ENCODE measurements at regions of chr5 and their contacts with region 1.

Region 1: GRCh38 chr5:177317959-177318377 is 6.3 kb upstream of the MXD3 start:
- DNase-seq: peak; percentile 89
- H3K4me3 Mint-ChIP-seq: no peak overlapping the region
- H3K27ac Mint-ChIP-seq: peak overlapping the region; percentile 65
- H3K4me1 Mint-ChIP-seq: peaks cover 39% of the 10 kb centered on the region
- H3K27me3 Mint-ChIP-seq: no peaks in the 10 kb centered on the region
- CTCF ChIP-seq: peak; percentile 86

Region 2: GRCh38 chr5:177351385-177352329 is 33.7 kb after region 1 on chr5 and contains the start of gene LMAN2:
- CTCF ChIA-PET with region 1: interaction called, 3 read pairs
- intact Hi-C with region 1: loop called (anchors 5 kb)
- DNase-seq: peak; percentile 94
- H3K4me3 Mint-ChIP-seq: peak within 1 kb of the TSS; percentile 86
- H3K27ac Mint-ChIP-seq: peak within 1 kb of the TSS; percentile 96
- H3K4me1 Mint-ChIP-seq: peaks cover 57% of the 10 kb centered on the region
- H3K27me3 Mint-ChIP-seq: no peaks in the 10 kb centered on the region
- CTCF ChIP-seq: no peak
- total RNA-seq, gene LMAN2: 278 and 305 TPM in 2 replicates

Region 3: DNA sequence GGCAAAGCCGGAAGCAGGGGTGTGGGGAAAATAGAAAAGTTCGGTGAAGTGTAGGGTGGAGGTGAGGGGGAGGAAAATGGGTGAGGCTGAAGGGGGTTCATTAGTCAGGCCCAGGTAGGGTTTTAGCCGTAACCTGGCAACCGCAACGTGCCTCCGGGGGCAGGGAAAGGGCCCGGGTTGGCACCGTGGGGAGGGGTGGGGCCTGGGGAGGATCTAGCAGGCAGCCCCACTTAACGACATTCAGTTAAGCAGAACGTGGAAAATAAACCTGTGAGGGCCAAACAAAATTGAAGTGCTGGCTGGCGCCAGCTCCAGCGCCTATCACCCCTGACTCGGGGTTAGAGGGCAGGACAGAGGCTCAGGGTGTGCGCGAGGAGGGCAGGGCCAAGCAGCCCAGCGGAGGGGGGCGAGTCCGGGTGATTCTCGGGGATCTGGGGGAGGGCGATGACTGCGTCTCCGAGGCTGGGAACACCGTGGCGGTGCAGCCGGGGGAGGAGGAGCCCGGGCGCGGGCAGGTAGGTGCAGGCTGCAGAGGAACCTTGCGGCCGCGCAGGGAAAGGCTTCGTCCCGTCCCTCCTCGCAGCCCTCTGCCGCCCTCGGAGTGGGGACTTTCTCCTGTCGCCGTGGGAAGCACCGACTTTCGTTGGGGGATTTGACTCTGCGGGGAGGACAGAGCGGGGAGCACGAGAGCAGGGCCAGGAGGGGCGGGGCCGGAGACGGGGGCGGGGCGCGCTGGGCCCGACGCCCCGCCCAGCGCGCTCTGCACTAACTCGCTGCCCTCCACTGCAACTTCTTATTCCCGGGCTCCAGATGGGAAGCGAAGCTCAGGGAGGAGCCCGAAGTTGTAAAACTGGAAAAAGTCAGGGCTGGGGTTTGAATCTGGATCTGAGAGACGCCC is 44.9 kb after region 1 on chr5:
- CTCF ChIA-PET with region 1: interaction called, 3 read pairs
- intact Hi-C with region 1: loop called (anchors 1 kb)
- DNase-seq: peak; percentile 69
- H3K4me3 Mint-ChIP-seq: peak overlapping the region; percentile 74
- H3K27ac Mint-ChIP-seq: peak overlapping the region; percentile 19
- H3K4me1 Mint-ChIP-seq: peaks cover 23% of the 10 kb centered on the region
- H3K27me3 Mint-ChIP-seq: no peaks in the 10 kb centered on the region
- CTCF ChIP-seq: no peak

Measured in Calu3 (cell line).